ENCODE measurements at regions of chr6 and their contacts with region 1.

Region 1: GRCh38 chr6:78324213-78324612 is 543.1 kb upstream of the IRAK1BP1 start:
- DNase-seq: no peak
- H3K4me3 ChIP-seq: no peak overlapping the region
- H3K27ac ChIP-seq: no peak overlapping the region
- H3K4me1 ChIP-seq: no peaks in the 10 kb centered on the region
- H3K27me3 ChIP-seq: no peaks in the 10 kb centered on the region
- CTCF ChIP-seq: no peak

Region 2: DNA sequence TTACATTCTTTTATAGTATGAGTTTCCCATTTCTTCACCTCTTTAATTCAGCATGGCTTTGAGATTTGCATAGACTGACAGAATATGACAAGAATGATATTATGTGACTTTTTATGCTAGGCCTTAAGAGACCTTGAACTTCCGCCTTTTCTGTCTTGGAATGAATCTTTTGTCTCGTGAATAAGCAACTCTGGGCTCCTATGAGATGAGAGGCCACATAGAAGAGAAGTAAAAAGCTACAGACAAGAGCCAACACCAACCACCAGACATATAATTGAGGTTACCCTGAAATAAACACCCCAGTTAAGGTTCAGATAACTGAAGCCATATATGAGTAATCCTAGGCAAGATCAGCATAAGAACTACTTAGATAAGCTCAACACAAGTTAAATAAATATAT is 70.6 kb before region 1 on chr6:
- CTCF ChIA-PET with region 1: no interaction called
- POLR2A ChIA-PET with region 1: no interaction called
- intact Hi-C with region 1: loop called (anchors 1 kb)
- DNase-seq: no peak
- H3K4me3 ChIP-seq: no peak overlapping the region
- H3K27ac ChIP-seq: no peak overlapping the region
- H3K4me1 ChIP-seq: no peaks in the 10 kb centered on the region
- H3K27me3 ChIP-seq: no peaks in the 10 kb centered on the region
- CTCF ChIP-seq: no peak

Measured in A673 (cell line).